CD4-positive, alpha-beta memory T cell (primary cell): ENCODE measurements at regions of chrX and their contacts with region 1.

Region 1: DNA sequence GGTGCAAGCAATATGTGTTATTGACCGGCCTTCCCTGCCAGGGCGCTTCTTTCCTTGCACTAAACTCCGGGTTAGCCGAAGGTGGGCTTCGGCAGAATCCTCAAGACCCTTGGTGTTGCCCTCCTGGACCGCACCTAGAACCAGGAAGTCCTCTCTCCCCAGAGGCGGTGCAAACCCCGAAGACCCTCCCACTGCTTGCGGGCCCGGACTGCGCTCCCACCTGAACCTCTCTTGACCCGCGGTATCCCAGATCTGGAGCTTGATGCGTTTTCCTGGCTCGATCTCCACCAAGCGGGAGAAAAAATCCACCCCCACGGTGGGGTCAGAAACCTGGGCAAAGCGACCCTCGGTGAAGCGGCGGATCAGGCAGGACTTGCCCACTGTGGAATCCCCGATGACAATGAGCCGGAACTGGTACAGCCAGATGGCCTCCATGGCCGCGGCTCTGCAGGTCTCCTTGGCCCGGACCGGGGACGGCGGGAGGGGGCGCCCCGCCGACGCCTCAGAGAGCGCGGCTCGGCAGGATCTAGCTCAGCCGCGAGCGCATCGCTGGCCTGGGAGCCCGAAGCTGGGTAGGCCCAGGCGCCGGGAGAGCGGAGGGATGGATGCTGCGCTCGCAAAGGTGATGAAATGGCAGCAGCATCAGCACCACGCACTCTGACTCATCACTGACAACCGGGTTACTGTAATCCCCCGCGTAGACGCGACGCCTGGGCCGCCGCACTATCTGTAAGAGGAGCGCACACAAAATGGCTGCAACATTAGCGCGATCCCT is at the start of gene RAB39B:
- DNase-seq: peak; percentile 65 to 83 (median 72)
- H3K4me3 ChIP-seq: peak within 1 kb of the TSS; percentile 42 to 78
- H3K4me3 Mint-ChIP-seq: peak within 1 kb of the TSS; percentile 66 to 91 (median 83)
- H3K27ac ChIP-seq: peak within 1 kb of the TSS; percentile 87
- H3K27ac Mint-ChIP-seq: peak within 1 kb of the TSS; percentile 62 to 97 (median 82)
- H3K4me1 ChIP-seq: peaks cover 31% of the 10 kb centered on the region
- H3K4me1 Mint-ChIP-seq: peaks cover 10 to 40% (median 16%) of the 10 kb centered on the region in 4 donors
- H3K27me3 ChIP-seq: no peaks in the 10 kb centered on the region
- H3K27me3 Mint-ChIP-seq: no peaks in the 10 kb centered on the region
- total RNA-seq, gene RAB39B: 16.5 to 16.6 TPM

Region 2: GRCh38 chrX:155881158-155881993 is 617.3 kb after region 1 on chrX and contains the start of gene VAMP7:
- CTCF ChIA-PET with region 1: no interaction called
- POLR2A ChIA-PET with region 1: no interaction called
- intact Hi-C with region 1: loop called (anchors 5 kb)
- DNase-seq: peak; percentile 75 to 86 (median 77)
- H3K4me3 ChIP-seq: peak within 1 kb of the TSS; percentile 57 to 70
- H3K4me3 Mint-ChIP-seq: peak within 1 kb of the TSS; percentile 91 to 96 (median 94)
- H3K27ac ChIP-seq: peak within 1 kb of the TSS; percentile 74
- H3K27ac Mint-ChIP-seq: peak within 1 kb of the TSS; percentile 83 to 96 (median 94)
- H3K4me1 ChIP-seq: peaks cover 26% of the 10 kb centered on the region
- H3K4me1 Mint-ChIP-seq: peaks cover 16 to 40% (median 28%) of the 10 kb centered on the region in 4 donors
- H3K27me3 ChIP-seq: no peaks in the 10 kb centered on the region
- H3K27me3 Mint-ChIP-seq: no peaks in the 10 kb centered on the region
- total RNA-seq, gene VAMP7: 22.3 to 22.7 TPM